ENCODE measurements at regions of chr13 and their contacts with region 1.

Region 1: GRCh38 chr13:94073007-94073756 is 406.3 kb downstream of the DCT start:
- DNase-seq: peak; percentile 43
- ATAC-seq: peak; percentile 70
- H3K4me3 ChIP-seq: no peak overlapping the region
- H3K27ac ChIP-seq: no peak overlapping the region
- H3K4me1 ChIP-seq: peaks cover 9% of the 10 kb centered on the region; the same call in 1 of the 2 replicates
- H3K27me3 ChIP-seq: no peaks in the 10 kb centered on the region
- CTCF ChIP-seq: no peak

Region 2: DNA sequence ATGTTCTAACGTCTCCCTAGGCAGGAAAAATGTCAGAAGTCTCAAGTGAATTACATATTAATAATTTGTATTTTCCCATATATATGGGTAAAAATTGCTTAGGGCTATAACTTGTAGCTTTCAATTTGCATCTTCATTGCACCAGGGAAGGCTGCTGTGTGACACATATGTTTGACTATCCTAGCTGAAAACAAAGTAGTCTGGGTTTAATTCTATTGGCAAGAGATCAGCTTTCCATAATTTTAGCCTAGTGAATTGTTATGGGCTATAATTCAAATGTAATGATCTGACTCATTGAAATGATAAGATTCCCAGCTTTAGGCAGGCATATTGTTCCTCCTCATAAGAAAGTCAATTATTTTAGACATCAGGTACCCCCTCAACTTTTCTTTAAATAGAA is 146.8 kb before region 1 on chr13:
- CTCF ChIA-PET with region 1: no interaction called
- POLR2A ChIA-PET with region 1: no interaction called
- intact Hi-C with region 1: no loop called
- DNase-seq: no peak
- ATAC-seq: 0 out of 2 replicates have a peak, but pooled peaks have one; percentile 18
- H3K4me3 ChIP-seq: no peak overlapping the region
- H3K27ac ChIP-seq: no peak overlapping the region
- H3K4me1 ChIP-seq: no peaks in the 10 kb centered on the region
- H3K27me3 ChIP-seq: no peaks in the 10 kb centered on the region
- CTCF ChIP-seq: no peak

Region 3: GRCh38 chr13:94192431-94192975 is 119.3 kb after region 1 on chr13:
- CTCF ChIA-PET with region 1: no interaction called
- POLR2A ChIA-PET with region 1: no interaction called
- intact Hi-C with region 1: loop called (anchors 5 kb)
- DNase-seq: peak; percentile 53
- ATAC-seq: peak; percentile 59
- H3K4me3 ChIP-seq: no peak overlapping the region
- H3K27ac ChIP-seq: no peak overlapping the region
- H3K4me1 ChIP-seq: no peaks in the 10 kb centered on the region
- H3K27me3 ChIP-seq: no peaks in the 10 kb centered on the region
- CTCF ChIP-seq: peak; percentile 69

Region 4: DNA sequence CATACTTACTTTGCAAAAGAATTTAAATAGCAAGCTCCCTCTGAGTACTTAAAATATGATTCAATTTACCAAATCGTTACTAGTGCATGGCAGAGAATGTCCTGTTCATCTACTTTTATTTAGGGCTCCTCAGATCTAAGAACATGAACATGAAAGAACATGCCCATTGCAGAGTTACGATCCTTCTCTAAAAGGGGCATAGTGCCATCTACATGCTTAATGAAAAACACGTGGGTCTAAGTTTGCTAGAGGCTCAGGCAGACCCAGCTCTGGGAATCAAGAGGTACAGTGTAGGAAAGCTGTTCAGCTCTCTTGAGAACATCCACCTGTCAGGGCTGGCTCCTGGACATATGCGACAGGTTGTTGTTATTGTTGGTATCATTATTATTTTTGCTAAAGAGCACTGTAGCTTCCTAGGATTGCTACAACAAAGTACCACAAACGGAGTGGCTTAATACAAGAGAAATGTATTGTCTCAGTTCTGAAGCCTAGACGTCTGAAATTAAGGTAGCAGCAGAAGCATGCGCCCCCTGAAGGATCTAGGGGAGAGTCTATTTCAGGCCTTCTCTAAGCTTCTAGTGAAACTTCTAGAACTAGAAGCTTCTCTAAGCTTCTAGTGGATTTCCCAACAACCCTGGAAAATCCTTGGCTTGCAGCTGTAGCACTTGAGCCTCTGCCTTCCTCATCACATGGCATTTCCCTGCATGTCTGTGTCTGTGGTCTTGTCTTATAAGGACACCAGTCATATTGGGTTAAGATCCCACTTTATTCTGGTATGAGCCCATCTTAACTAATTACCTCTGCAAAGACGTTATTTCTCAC is 272.4 kb after region 1 on chr13:
- CTCF ChIA-PET with region 1: no interaction called
- POLR2A ChIA-PET with region 1: no interaction called
- intact Hi-C with region 1: loop called (anchors 10 kb)
- DNase-seq: peak; percentile 19
- ATAC-seq: peak; percentile 56
- H3K4me3 ChIP-seq: no peak overlapping the region
- H3K27ac ChIP-seq: no peak overlapping the region
- H3K4me1 ChIP-seq: 0 out of 2 replicates have a peak, but pooled peaks cover 4% of the 10 kb centered on the region
- H3K27me3 ChIP-seq: no peaks in the 10 kb centered on the region
- CTCF ChIP-seq: peak; percentile 37; the same call in 1 of the 2 replicates

Measured in PC-3 (cell line).